Gastrocnemius medialis (tissue), 4 donors: ENCODE measurements at regions of chr15 and their contacts with region 1.

Region 1: GRCh38 chr15:86855307-86856291 is 775.9 kb downstream of the AGBL1 start:
- DNase-seq: peak in 1 of 2 donors; percentile 47
- ATAC-seq: peak; percentile 63 to 71
- H3K4me3 ChIP-seq: no peak overlapping the region
- H3K27ac ChIP-seq: peak overlapping the region in 3 of 4 donors; percentile 68 to 77 (median 74)
- H3K4me1 ChIP-seq: peaks cover 32 to 41% of the 10 kb centered on the region in 2 donors
- H3K27me3 ChIP-seq: no peaks in the 10 kb centered on the region
- CTCF ChIP-seq: no peak
- POLR2A ChIP-seq: peak in 1 of 2 donors; percentile 9

Region 2: GRCh38 chr15:86877171-86877646 is 21.6 kb after region 1 on chr15:
- in situ Hi-C with region 1: no loop called
- intact Hi-C with region 1: loop called (anchors 1 kb)
- DNase-seq: peak; percentile 15 to 34
- ATAC-seq: peak; percentile 73 to 78
- H3K4me3 ChIP-seq: no peak overlapping the region
- H3K27ac ChIP-seq: no peak overlapping the region
- H3K4me1 ChIP-seq: peaks cover 15 to 25% of the 10 kb centered on the region in 2 donors
- H3K27me3 ChIP-seq: no peaks in the 10 kb centered on the region
- CTCF ChIP-seq: peak; percentile 12 to 50 (median 37)
- POLR2A ChIP-seq: no peak

Region 3: DNA sequence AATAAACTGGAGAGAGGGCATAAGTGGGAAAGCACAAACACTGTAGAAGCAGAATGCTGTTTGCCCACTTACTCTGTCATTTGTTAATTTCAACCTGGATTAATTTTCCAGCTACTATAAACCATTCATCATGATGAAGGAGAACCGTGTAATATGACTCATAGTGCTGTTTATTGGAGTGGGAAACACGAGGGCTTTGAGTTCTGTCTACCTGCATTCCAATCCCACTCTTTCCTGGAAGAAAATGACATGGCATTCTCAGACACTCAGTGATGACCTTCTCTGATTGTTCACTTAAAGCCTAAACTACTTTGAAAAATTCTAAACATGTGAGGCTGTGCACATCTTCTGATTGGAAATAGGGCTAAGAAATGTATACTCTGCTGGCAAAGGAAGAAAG is 50.8 kb after region 1 on chr15:
- in situ Hi-C with region 1: no loop called
- intact Hi-C with region 1: no loop called
- DNase-seq: no peak
- ATAC-seq: no peak
- H3K4me3 ChIP-seq: no peak overlapping the region
- H3K27ac ChIP-seq: no peak overlapping the region
- H3K4me1 ChIP-seq: no peaks in the 10 kb centered on the region
- H3K27me3 ChIP-seq: no peaks in the 10 kb centered on the region
- CTCF ChIP-seq: no peak
- POLR2A ChIP-seq: no peak

Region 4: DNA sequence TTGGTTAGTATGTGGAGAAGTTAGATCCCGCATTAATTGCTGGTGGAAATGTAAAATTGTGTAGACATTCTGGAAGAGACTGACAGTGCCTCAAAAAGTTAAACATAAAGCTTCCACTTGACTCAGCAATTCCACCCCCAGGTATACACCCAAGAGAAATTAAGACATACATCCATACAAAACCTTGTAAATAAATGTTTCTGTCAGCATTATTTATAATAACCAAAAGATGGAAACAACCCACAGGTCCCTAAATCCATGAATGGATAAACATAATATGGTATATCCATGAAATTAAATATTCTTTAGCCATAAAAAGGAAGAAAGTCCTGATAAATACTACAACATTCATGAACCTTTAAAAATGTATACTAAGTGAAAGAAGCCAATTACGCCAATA is 583.5 kb after region 1 on chr15:
- in situ Hi-C with region 1: no loop called
- intact Hi-C with region 1: no loop called
- DNase-seq: no peak
- ATAC-seq: no peak
- H3K4me3 ChIP-seq: no peak overlapping the region
- H3K27ac ChIP-seq: no peak overlapping the region
- H3K4me1 ChIP-seq: peaks cover 0 to 8% of the 10 kb centered on the region in 2 donors
- H3K27me3 ChIP-seq: no peaks in the 10 kb centered on the region
- CTCF ChIP-seq: no peak
- POLR2A ChIP-seq: no peak